OCI-LY7 (cell line): ENCODE measurements at regions of chr9 and their contacts with region 1.

Region 1: GRCh38 chr9:8062459-8062858 is 262.9 kb upstream of the DMAC1 start:
- DNase-seq: no peak
- H3K4me3 ChIP-seq: no peak overlapping the region
- H3K27ac ChIP-seq: no peak overlapping the region
- H3K4me1 ChIP-seq: peaks cover under 1% of the 10 kb centered on the region
- CTCF ChIP-seq: no peak

Region 2: DNA sequence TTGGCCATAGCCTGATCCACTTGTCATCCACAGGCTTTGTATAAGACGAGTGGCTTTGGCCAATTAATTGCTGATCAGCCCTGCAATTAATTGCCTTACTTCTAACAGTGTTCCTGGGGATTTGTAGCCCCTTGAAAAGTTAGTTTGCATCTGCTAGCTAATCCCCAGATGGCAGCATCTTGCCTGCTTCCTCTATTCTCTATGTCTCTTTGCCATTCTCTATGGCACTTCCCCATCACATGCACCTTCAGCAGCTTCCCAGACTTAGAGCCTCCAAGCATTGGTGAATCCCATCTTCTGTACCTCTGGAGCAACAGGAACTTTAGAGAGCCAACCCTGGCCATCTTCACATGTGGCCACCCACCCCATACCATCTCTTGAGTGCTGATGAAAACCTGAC is 65.9 kb before region 1 on chr9:
- CTCF ChIA-PET with region 1: no interaction called
- POLR2A ChIA-PET with region 1: no interaction called
- intact Hi-C with region 1: no loop called
- DNase-seq: no peak
- H3K4me3 ChIP-seq: no peak overlapping the region
- H3K27ac ChIP-seq: no peak overlapping the region
- H3K4me1 ChIP-seq: no peaks in the 10 kb centered on the region
- CTCF ChIP-seq: no peak

Region 3: DNA sequence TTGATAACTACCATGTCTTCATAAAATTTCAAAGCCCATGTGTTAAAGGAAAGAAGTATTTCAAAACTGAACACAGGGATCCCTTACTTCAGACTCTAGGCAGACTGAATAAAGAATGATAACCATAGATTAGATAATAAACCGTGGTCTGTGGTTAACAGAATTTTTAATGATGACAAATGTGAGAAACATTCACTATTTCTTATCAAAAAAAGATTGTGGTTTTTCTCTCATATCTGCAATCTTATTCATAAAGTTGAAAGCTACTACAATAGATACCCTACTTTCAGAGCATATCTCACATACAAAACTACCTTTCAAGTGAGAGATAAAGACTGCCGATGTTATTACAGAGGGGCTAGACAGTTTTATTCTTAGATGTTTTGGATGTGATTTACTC is 554.0 kb after region 1 on chr9:
- CTCF ChIA-PET with region 1: no interaction called
- POLR2A ChIA-PET with region 1: no interaction called
- intact Hi-C with region 1: no loop called
- DNase-seq: no peak
- H3K4me3 ChIP-seq: no peak overlapping the region
- H3K27ac ChIP-seq: no peak overlapping the region
- H3K4me1 ChIP-seq: no peaks in the 10 kb centered on the region
- CTCF ChIP-seq: no peak

Region 4: GRCh38 chr9:8660383-8660782 is 597.9 kb after region 1 on chr9:
- CTCF ChIA-PET with region 1: no interaction called
- POLR2A ChIA-PET with region 1: interaction called, 10 read pairs
- intact Hi-C with region 1: no loop called
- DNase-seq: no peak
- H3K4me3 ChIP-seq: no peak overlapping the region
- H3K27ac ChIP-seq: no peak overlapping the region
- H3K4me1 ChIP-seq: no peaks in the 10 kb centered on the region
- CTCF ChIP-seq: no peak